Panc1 (cell line): ENCODE measurements at regions of chr2 and their contacts with region 1.

Region 1: DNA sequence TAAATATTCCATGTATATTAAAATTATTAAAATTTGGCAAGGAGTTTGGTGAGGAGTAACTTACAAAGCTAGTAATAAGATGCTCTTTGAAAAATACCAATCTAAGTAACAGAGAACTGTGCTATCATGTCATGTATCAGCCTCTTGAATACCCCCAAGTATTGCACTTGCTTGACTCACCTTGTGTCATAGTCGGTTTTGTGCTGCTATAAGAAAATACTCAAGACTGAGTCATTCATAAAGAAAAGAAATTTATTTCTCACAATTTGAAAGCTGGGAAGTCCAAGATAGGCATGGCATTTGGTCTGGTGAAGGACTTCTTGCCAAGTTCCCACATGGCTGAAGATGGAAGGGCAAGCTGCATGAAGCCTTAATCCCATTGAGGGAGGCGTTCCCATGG is 179.2 kb downstream of the MEMO1 start:
- DNase-seq: no peak
- ATAC-seq: no peak
- H3K4me3 ChIP-seq: no peak overlapping the region
- H3K27ac ChIP-seq: no peak overlapping the region
- H3K4me1 ChIP-seq: no peaks in the 10 kb centered on the region
- H3K27me3 ChIP-seq: no peaks in the 10 kb centered on the region
- CTCF ChIP-seq: no peak

Region 2: DNA sequence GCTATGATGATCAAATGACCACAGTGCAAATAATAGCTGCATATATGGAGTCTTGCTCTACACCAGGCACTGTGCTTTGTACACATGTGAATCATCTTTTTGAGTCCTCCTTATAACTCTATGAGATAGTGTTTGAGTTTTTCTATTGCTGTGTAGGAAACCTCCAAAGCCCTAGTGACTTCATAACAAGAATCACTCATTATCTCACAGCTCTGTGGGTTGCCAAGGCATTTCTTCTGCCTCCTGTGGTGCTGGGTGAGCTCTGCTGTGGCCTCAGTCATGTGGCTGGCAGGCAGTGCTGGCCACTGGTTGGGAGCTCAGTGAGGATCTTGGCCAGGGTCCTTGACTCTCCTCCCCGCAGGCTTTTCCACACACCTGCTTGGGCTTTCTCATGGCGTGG is 1177.7 kb before region 1 on chr2:
- CTCF ChIA-PET with region 1: no interaction called
- POLR2A ChIA-PET with region 1: no interaction called
- in situ Hi-C with region 1: no loop called
- intact Hi-C with region 1: no loop called
- DNase-seq: no peak
- ATAC-seq: no peak
- H3K4me3 ChIP-seq: no peak overlapping the region
- H3K27ac ChIP-seq: no peak overlapping the region
- H3K4me1 ChIP-seq: no peaks in the 10 kb centered on the region
- H3K27me3 ChIP-seq: no peaks in the 10 kb centered on the region
- CTCF ChIP-seq: no peak

Region 3: GRCh38 chr2:31694444-31694843 is 137.1 kb before region 1 on chr2:
- CTCF ChIA-PET with region 1: no interaction called
- POLR2A ChIA-PET with region 1: no interaction called
- in situ Hi-C with region 1: no loop called
- intact Hi-C with region 1: loop called (anchors 10 kb)
- DNase-seq: no peak
- ATAC-seq: no peak
- H3K4me3 ChIP-seq: no peak overlapping the region
- H3K27ac ChIP-seq: no peak overlapping the region
- H3K4me1 ChIP-seq: no peaks in the 10 kb centered on the region
- H3K27me3 ChIP-seq: no peaks in the 10 kb centered on the region
- CTCF ChIP-seq: peak; percentile 57

Region 4: DNA sequence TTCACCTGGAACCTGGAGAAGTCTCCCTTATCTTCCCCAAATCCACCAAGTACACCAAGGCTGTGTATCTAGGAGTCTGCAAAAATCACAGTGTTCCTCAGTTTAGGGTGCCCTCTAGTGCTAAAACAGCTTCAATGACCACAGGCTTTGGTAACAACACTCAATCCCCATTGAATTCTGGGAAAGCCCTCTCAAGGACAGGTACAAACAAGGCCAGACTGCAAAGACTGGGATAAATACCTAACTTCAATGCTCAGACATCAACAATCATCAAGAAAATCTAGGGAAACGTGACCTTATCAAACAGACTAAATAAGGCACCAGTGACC is 101.9 kb before region 1 on chr2:
- CTCF ChIA-PET with region 1: no interaction called
- POLR2A ChIA-PET with region 1: no interaction called
- in situ Hi-C with region 1: no loop called
- intact Hi-C with region 1: no loop called
- DNase-seq: peak; percentile 12
- ATAC-seq: peak; percentile 84
- H3K4me3 ChIP-seq: no peak overlapping the region
- H3K27ac ChIP-seq: no peak overlapping the region
- H3K4me1 ChIP-seq: no peaks in the 10 kb centered on the region
- H3K27me3 ChIP-seq: no peaks in the 10 kb centered on the region
- CTCF ChIP-seq: peak; percentile 74

Region 5: GRCh38 chr2:32010670-32011484 is 179.3 kb after region 1 on chr2 and contains the start of gene MEMO1:
- CTCF ChIA-PET with region 1: no interaction called
- POLR2A ChIA-PET with region 1: no interaction called
- in situ Hi-C with region 1: no loop called
- intact Hi-C with region 1: no loop called
- DNase-seq: peak; percentile 77
- ATAC-seq: peak; percentile 89
- H3K4me3 ChIP-seq: peak within 1 kb of the TSS; percentile 88 to 96
- H3K27ac ChIP-seq: peak within 1 kb of the TSS; percentile 100
- H3K4me1 ChIP-seq: peaks cover 23% of the 10 kb centered on the region
- H3K27me3 ChIP-seq: no peaks in the 10 kb centered on the region
- CTCF ChIP-seq: no peak
- total RNA-seq, gene MEMO1: 60.8 TPM